ENCODE measurements at regions of chr13 and their contacts with region 1.

Region 1: GRCh38 chr13:44141725-44142539 is 231.7 kb upstream of the SERP2 start:
- DNase-seq: peak; percentile 95
- H3K4me3 ChIP-seq: peak overlapping the region; percentile 56 to 59 (median 57)
- H3K27ac ChIP-seq: peak overlapping the region; percentile 90
- H3K4me1 ChIP-seq: peaks cover 26% of the 10 kb centered on the region
- H3K27me3 ChIP-seq: no peaks in the 10 kb centered on the region
- CTCF ChIP-seq: no peak

Region 2: DNA sequence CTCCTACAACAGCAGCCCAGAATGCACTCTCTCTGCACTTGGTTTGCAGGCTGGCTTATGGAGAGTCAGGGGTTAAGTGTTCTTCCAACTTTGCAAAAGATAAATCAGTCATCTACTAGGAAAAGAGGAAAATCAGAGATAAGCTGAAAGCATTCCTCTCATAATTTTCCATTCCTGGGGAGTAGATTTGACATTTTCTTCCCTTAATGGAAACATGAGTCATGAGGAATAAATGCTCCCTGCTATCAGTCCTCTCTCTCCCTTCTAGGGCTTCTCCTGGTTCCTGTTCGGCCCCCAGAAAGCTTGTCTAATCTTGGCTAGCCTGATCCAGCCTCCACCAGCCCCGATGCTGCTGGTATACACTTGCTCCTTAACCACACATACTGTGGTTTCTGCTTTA is 326.7 kb before region 1 on chr13:
- CTCF ChIA-PET with region 1: no interaction called
- dilution Hi-C with region 1: no loop called
- in situ Hi-C with region 1: no loop called
- intact Hi-C with region 1: no loop called
- DNase-seq: peak; percentile 67
- H3K4me3 ChIP-seq: no peak overlapping the region
- H3K27ac ChIP-seq: no peak overlapping the region
- H3K4me1 ChIP-seq: peaks cover 10% of the 10 kb centered on the region
- H3K27me3 ChIP-seq: no peaks in the 10 kb centered on the region
- CTCF ChIP-seq: no peak

Region 3: DNA sequence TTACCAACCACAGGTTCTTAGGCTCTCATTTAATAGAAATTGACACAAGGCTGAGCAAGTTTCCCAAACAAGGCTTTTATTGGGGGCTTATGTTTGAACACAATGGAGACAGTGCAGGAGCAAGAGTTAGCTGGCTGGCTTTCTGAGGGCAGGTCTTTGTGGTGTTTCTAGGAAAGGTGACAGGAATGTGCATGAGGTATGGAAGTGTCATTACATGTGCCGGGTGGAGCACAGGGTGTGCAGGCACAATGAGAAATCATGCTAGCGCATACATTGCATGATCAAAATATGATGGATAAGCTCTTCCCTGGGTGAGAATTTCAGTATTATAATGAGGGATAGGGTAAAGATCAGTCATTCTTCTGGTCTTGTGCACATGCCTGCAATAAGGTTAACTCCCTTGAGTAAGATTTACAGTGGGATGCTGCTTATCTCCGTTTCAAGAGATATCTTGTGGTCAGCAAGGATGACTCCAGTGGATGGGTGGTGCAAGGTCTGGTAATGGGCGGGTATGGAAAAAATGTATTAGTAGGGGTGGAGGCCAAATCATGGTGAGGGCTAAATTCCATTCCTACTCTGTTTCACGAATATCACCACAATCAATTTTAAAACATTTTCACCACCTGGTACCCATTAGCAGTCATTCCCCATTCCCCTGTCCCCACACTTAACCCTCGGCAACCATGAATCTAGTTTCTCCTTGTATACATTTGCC is 303.2 kb before region 1 on chr13:
- CTCF ChIA-PET with region 1: no interaction called
- dilution Hi-C with region 1: no loop called
- in situ Hi-C with region 1: no loop called
- intact Hi-C with region 1: no loop called
- DNase-seq: no peak
- H3K4me3 ChIP-seq: no peak overlapping the region
- H3K27ac ChIP-seq: no peak overlapping the region
- H3K4me1 ChIP-seq: no peaks in the 10 kb centered on the region
- H3K27me3 ChIP-seq: no peaks in the 10 kb centered on the region
- CTCF ChIP-seq: no peak

Region 4: GRCh38 chr13:44050450-44051063 is 91.4 kb before region 1 on chr13:
- CTCF ChIA-PET with region 1: no interaction called
- dilution Hi-C with region 1: no loop called
- in situ Hi-C with region 1: no loop called
- intact Hi-C with region 1: loop called (anchors 5 kb)
- DNase-seq: peak; percentile 20
- H3K4me3 ChIP-seq: no peak overlapping the region
- H3K27ac ChIP-seq: no peak overlapping the region
- H3K4me1 ChIP-seq: peaks cover 5% of the 10 kb centered on the region
- H3K27me3 ChIP-seq: no peaks in the 10 kb centered on the region
- CTCF ChIP-seq: peak; percentile 66 to 77

Region 5: GRCh38 chr13:44160591-44161191 is 18.8 kb after region 1 on chr13:
- CTCF ChIA-PET with region 1: no interaction called
- dilution Hi-C with region 1: no loop called
- in situ Hi-C with region 1: no loop called
- intact Hi-C with region 1: loop called (anchors 1 kb)
- DNase-seq: peak; percentile 72
- H3K4me3 ChIP-seq: no peak overlapping the region
- H3K27ac ChIP-seq: peak overlapping the region; percentile 95
- H3K4me1 ChIP-seq: peaks cover 33% of the 10 kb centered on the region
- H3K27me3 ChIP-seq: no peaks in the 10 kb centered on the region
- CTCF ChIP-seq: no peak

Region 6: GRCh38 chr13:44191504-44192171 is 49.7 kb after region 1 on chr13:
- CTCF ChIA-PET with region 1: no interaction called
- dilution Hi-C with region 1: no loop called
- in situ Hi-C with region 1: no loop called
- intact Hi-C with region 1: loop called (anchors 1 kb)
- DNase-seq: peak; percentile 70
- H3K4me3 ChIP-seq: no peak overlapping the region
- H3K27ac ChIP-seq: no peak overlapping the region
- H3K4me1 ChIP-seq: peaks cover 26% of the 10 kb centered on the region
- H3K27me3 ChIP-seq: no peaks in the 10 kb centered on the region
- CTCF ChIP-seq: peak; percentile 53 to 62

Region 7: DNA sequence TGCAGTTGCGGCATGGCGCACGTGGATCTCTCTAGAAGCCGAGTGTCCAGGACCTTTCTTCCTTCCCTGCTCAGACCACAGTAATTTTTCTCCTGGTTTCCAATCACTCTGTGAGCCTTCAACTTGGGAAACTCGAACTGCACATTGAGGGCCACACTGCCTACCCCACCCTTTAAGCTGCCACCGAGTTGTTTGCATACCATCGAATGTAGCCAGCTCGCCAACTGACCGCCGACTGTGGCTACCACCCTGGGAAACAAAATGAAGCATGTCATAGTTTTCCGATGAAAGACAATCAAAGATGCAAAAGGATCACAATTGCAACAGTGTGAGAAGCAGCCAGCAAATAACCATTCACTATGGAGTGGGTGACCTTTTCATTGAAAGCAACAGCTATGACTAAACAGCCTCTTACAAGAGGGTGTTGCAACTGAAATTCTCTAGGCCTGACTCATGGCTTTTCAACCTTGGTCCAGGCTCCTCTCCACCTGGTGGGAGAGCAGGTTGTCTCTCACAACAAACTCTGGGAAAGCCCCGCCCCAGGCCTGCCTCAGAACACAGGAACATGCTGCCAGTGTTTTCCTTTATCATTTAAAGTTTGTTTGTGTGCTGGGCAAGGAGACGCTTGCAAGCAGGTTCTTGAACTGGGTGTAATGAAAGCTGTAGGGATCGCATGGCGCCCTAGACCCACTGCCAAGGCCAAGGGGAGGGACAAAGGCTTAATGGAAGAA is 90.0 kb after region 1 on chr13:
- CTCF ChIA-PET with region 1: no interaction called
- dilution Hi-C with region 1: no loop called
- in situ Hi-C with region 1: no loop called
- intact Hi-C with region 1: loop called (anchors 1 kb)
- DNase-seq: peak; percentile 98
- H3K4me3 ChIP-seq: no peak overlapping the region
- H3K27ac ChIP-seq: peak overlapping the region; percentile 70
- H3K4me1 ChIP-seq: peaks cover 17% of the 10 kb centered on the region
- H3K27me3 ChIP-seq: no peaks in the 10 kb centered on the region
- CTCF ChIP-seq: peak in 1 of 2 donors; percentile 53

Region 8: GRCh38 chr13:44306401-44307192 is 164.7 kb after region 1 on chr13:
- CTCF ChIA-PET with region 1: no interaction called
- dilution Hi-C with region 1: no loop called
- in situ Hi-C with region 1: no loop called
- intact Hi-C with region 1: loop called (anchors 2 kb)
- DNase-seq: peak; percentile 97
- H3K4me3 ChIP-seq: peak overlapping the region in 1 of 3 experiments; percentile 0
- H3K27ac ChIP-seq: peak overlapping the region; percentile 91
- H3K4me1 ChIP-seq: peaks cover 61% of the 10 kb centered on the region
- H3K27me3 ChIP-seq: no peaks in the 10 kb centered on the region
- CTCF ChIP-seq: no peak

Measured in mammary epithelial cell (primary cell).